Head of caudate nucleus (tissue), 42 donors: ENCODE measurements at regions of chr1 and their contacts with region 1.

Region 1: GRCh38 chr1:154344977-154345837 is 19.9 kb downstream of the ATP8B2 start:
- DNase-seq: peak in 11 of 42 donors; percentile 26 to 64 (median 49)

Region 2: DNA sequence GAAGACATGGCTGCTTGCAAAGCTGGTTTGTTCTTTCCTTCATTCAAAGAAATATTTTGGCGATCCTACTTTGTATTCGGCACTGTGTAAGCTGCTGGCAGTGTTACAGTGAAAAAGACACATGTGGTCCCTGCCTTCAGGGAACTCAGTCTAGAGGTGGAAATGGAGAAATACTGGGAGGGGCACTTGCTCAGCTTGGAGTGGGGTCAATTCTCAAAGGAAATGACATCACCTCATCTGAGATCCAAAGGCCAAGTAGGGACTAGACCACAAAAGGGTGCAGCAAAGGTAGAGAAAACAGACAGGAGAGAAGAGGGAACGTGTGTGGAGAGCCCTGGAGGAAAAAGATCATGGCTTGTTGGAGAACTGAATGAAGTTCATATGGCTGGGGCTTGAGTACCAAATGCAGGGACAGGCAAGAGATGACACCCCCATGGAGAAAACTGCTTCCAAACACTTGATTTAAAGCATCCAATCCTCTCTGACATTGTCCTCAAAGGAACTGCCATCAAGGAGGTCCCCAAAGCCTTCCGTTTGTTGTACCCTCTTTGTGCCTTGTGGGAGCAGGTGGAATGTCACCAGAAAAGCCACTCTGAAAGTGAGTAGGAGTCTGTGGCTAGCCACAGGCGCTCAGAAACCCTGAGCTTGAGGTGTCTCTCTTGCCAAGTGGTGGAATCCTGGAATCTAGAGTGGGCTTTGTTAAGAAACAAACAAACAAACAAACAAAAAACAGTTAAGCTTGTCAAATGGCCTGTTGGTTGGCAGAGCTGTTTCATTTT is 108.6 kb after region 1 on chr1:
- intact Hi-C with region 1: loop called (anchors 10 kb)
- DNase-seq: peak in 2 of 42 donors; percentile 23 to 46

Region 3: GRCh38 chr1:154558575-154559465 is 213.6 kb after region 1 on chr1 and contains the start of gene UBE2Q1:
- intact Hi-C with region 1: no loop called
- DNase-seq: peak; percentile 98 to 100 (median 99)